Dorsolateral prefrontal cortex (tissue), 120 donors: ENCODE measurements at regions of chr15 and their contacts with region 1.

Region 1: GRCh38 chr15:42056934-42057779 is 36.3 kb upstream of the PLA2G4E start:
- DNase-seq: peak; percentile 58 to 81 (median 73)
- H3K4me3 ChIP-seq: peak overlapping the region in 57 of 59 donors; percentile 2 to 60 (median 42)
- H3K27ac ChIP-seq: no peak overlapping the region
- H3K27me3 ChIP-seq: no peaks in the 10 kb centered on the region
- CTCF ChIP-seq: peak in 55 of 56 donors; percentile 38 to 81 (median 64)

Region 2: GRCh38 chr15:41989259-41989933 is 67.8 kb before region 1 on chr15:
- intact Hi-C with region 1: loop called (anchors 2 to 5 kb)
- DNase-seq: peak; percentile 76 to 91 (median 84)
- H3K4me3 ChIP-seq: no peak overlapping the region
- H3K27ac ChIP-seq: no peak overlapping the region
- H3K27me3 ChIP-seq: peaks cover 0 to 3% (median 0%) of the 10 kb centered on the region in 45 donors
- CTCF ChIP-seq: peak; percentile 69 to 99 (median 96)

Region 3: DNA sequence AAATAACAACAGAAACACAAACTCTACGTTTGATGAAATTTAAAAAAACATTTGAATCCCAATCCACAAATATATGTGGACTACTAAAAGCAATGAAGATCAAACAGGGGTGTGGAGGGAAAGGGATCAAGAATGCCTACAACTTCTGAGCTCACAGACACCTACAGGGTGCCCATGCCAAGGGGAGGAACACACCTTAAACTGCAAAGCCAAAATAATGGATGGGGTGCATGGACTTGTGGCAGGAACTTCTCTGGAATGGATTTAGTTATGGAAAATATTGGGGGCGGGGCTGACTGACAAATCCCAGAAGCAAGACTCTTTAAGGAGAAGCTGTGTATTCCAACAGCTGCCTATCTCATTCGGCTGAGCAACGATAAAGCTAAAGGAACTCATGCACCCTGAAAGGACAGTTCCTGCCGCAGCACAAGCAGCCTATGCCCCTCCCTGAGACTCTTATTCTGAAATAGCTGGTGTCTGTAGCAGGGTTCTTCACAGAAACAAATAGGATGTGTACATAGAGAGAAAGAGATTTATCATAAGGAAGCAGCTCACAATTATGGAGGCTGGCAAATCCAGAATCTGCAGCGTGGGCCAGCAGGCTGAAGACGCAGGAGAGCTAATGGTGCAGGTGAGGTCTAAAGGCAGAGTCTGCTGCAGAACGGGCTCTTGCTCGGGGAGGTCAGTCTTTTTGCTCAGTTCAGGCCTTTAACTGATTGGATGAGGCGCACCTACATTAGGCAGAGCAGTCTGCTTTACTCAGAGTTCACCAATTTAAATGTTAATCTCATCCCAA is 61.7 kb after region 1 on chr15:
- intact Hi-C with region 1: no loop called
- DNase-seq: no peak
- H3K4me3 ChIP-seq: no peak overlapping the region
- H3K27ac ChIP-seq: no peak overlapping the region
- H3K27me3 ChIP-seq: no peaks in the 10 kb centered on the region
- CTCF ChIP-seq: no peak